ENCODE measurements at regions of chr3 and their contacts with region 1.

Region 1: DNA sequence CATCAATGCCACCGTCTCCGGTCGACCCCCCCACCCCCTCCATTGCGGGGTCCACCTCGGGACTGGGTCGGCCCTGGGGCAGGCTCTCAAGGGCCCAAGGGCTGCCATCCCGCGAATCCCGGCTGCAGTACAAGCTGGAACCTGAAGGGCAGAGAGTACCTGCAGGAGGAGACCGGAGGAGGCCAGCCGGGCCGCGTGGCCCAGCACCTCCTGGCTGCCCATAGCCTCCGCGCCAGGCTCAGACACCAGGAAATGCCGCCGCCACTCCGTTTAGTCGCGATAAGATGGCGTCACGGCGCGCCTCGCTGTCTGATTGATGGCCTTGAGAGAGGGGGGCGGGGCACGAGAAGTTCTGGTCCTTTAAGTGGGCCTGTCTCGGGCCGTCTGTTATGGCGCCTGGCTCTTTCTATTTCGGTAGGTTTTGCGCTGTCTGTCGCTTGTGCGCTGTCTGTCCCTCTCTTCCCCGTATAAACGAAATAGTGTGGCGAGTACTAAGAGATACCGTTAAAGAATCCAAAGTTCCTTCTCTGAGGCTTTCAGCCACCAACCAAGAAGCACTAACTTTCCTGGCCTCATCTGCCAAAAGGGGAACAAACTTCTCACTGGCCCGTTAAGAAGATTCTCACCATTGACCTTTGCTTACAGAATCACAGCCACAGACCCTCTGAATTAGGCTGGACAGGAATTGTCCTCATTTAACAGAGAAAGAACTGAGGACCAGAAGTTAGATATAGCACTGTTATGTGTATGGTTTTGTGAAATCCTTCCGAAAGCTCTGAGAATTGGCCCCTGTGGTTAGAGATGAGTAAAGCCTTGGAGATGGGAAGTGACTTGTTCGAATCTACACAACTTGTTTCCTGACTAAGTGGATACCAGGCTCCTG is at the start of gene RFT1:
- DNase-seq: peak; percentile 100
- ATAC-seq: peak; percentile 95
- total RNA-seq, gene RFT1: 11.0 TPM

Region 2: DNA sequence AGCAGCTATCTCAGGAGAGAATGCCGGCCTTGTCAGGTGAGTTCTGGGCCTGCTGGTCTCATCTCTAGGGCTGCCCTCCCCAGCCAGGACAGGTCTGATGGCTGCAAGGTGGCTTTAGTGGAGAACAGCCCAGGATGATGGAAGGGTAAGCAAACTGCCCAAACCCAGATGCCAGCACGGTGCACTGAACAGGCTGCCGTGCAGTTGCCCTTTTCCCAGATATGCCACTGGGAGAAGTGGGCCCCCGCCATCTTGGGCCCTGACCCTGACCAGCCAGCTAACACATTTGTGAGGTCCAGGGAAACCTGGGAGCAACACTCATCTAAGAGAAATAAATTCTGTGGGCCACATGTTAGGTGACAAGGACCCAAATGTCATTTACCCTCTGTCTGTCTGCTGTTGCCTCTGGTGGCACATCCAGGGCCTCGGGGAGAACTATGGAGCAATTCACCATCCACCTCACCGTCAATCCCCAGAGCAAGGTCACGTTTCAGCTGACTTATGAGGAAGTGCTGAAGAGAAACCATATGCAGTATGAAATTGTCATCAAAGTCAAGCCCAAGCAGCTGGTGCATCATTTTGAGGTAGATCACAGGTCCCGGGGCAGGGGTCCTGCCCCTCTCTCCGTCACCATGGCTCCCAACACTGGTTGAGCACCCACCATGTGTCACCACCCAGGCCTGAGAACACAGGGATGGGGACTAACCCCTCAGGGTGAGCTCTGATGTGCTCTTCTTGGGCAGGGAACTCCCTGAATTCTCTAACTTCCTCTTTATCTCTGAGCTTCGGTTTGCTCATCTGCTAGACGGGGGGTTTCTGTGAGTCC is 351.2 kb before region 1 on chr3:
- intact Hi-C with region 1: no loop called
- DNase-seq: no peak
- ATAC-seq: no peak

Region 3: GRCh38 chr3:53160660-53161449 is 30.4 kb after region 1 on chr3 and contains the start of gene PRKCD:
- intact Hi-C with region 1: loop called (anchors 2 kb)
- DNase-seq: peak; percentile 90
- ATAC-seq: peak; percentile 90
- total RNA-seq, gene PRKCD: 16.9 TPM

Region 4: DNA sequence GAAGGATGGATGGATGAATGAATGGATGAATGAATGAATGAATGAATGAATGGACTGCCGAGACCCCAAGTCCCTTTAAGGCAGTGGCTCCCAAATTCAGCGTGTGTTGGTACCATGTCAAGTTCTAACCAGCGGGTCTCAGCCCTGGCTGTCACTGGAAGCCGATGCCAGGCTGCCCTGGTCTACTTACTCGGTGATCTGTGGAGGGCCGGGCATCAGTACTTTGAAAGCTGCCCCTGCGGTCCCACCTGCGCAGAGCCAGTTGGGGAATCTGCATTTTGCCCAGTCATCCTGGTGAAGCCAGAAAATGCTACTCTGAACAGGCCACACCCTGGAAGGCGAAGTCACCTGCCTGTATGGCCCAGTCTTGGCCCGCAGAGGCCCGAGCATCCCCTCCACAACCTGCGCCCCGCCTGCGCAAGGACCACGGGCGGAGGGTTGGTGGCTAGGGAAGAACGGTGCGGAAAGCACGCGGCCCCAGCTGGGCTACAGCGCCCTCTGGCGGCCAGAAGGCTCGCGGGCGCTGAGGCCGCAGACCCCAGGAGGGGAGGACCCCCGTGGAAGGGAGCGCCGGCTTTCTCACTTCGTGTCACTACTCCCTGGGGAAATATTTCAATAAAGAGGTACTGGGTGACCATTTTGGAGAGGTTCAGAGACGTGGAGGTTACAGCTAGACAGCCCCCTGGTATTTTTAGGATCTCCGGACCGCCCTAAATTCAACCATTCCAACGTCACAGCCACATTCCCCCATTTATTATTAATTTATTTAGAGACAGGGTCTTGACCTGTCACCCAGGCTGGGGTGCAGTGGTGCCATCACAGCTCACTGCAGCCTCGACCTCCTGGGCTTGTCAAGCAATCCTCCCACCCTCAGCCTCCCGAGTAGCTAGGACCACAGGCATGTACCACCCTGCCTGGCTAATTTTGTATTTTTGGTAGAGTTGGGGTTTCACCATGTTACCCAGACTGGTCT is 65.5 kb after region 1 on chr3:
- intact Hi-C with region 1: loop called (anchors 1 kb)
- DNase-seq: peak; percentile 82
- ATAC-seq: peak; percentile 72

Region 5: DNA sequence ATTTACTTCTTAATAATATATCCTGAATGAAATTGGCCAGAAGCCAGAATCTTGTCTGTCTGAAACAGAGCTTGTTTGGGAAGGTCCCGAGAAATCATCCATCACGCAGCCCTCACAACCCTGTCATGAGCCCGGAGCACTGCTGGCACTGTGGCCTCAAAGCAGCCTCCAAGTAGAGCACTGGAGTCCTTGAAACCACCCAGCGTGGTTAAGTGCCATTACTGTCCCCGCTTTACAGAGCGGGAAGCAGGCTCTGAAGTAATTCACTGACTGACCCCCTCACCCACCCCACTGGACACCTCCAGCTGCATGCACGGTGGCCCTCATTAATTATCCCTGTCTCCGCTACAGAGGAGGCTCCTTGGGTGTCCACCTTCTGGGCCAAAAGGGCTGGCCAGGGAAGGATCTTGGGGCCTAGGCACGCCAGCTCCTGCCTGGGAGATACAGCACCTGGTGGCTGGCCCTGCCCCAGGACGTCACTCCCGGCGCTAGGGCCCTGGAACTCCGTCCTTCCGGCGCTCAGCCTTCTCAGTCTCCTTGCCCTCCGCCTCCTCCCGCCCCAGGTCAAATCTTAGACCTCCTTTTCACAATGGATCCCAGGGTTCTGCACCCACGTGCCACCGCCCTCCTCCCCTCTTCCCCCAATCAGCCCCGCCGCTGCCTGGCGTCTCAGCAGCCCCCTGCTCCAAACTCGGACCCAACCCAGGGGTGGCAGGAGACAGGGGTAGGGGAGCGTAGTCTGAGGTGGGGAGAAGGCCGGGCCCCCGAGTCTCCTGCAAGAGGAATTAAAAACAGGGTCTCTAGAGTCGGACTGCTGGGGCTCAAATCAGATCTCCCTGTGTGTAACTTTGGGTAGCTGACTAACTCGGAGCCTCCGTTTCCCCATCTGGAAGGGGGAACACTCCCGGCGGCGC is 124.3 kb after region 1 on chr3:
- intact Hi-C with region 1: loop called (anchors 5 kb)
- DNase-seq: peak; percentile 76
- ATAC-seq: peak; percentile 44

Region 6: DNA sequence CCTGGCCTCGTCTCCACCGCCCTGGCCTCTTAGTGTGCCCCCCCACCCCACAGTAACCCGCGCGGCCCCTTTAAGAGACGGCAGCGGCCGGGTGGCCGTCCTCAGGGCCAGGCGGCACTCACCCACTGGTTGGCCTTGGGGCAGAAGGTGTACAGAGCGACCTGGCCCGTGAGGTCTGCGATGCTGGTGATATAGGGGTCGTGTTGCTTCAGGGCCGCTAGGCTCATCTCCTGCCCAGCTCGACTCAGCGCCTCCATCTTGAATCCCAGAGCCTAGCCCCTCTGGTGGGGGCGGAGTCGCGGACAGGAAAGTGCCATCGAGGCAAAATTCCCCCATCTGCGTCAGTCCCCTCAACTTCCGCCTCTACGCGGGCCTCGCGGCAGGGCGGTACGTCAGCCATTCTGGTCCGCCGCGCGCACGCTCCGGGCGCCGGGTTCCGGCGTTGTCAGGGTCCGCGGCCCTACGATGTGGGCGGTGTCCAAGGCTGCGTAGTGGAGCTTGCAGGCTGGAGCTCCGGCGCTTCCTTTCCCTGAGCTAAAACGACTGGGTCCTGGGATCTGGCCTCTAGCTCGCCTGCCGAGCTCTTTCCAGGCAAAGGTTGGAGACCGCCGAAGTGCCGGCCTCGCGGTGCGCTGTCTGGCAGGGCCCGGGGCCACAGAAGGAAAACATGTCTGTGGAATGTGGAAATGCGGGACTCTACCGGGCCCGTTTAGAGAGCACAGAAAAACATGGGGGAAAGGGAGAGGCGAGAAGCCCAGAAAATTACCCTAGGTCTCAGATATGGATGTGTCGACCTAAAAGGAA is 217.0 kb after region 1 on chr3 and contains the start of gene DCP1A:
- intact Hi-C with region 1: loop called (anchors 5 kb)
- DNase-seq: peak; percentile 96
- ATAC-seq: peak; percentile 99
- total RNA-seq, gene DCP1A: 17.7 TPM

Measured in Right ventricle myocardium inferior (tissue), 1 donor.